CD4-positive, alpha-beta memory T cell (primary cell): ENCODE measurements at regions of chr19 and their contacts with region 1.

Region 1: DNA sequence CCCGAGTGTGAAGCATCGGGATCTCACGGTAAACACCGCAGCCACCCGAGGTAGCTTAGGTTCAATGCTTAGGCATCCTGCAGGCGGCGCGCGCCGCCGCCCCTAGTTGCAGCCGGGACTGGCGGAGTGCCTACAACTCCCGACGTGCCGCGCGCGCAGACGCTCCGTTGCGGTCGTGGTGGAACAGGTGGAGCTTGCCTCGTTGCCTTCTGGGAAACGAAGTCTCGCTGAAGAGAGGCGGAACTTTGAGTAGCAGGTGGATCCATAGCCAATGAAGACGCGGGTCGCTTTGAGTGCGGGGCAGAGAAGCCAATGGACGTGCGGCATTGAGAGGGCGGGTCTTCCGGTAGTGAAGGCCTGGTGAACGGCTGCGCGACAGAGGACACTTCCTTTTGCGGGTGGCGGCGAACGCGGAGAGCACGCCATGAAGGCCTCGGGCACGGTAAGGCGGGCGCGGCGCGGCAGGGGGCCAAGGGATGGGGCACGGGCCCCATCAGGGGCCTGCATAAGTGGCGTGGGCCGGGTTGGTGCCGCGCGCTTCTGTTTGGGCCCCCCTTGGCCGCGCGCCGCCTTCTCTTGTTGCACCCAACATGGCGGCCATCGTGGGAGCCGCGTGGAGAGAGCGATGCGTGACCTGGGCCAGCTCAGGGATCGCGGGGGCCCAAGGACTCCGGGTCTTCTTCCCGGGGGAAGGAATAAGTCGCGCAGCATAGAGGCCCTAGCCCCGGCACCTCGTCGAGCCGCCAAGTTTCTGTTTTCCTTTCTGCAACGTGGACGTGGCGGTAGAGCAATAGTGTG is at the start of gene RPL18A:
- DNase-seq: peak; percentile 96 to 100 (median 99)
- H3K4me3 ChIP-seq: peak within 1 kb of the TSS; percentile 91 to 100
- H3K4me3 Mint-ChIP-seq: peak within 1 kb of the TSS; percentile 98 to 100 (median 100)
- H3K27ac ChIP-seq: peak within 1 kb of the TSS; percentile 79
- H3K27ac Mint-ChIP-seq: peak within 1 kb of the TSS; percentile 88 to 100 (median 98)
- H3K4me1 ChIP-seq: peaks cover 36% of the 10 kb centered on the region
- H3K4me1 Mint-ChIP-seq: peaks cover 21 to 46% (median 29%) of the 10 kb centered on the region in 4 donors
- H3K27me3 ChIP-seq: no peaks in the 10 kb centered on the region
- H3K27me3 Mint-ChIP-seq: no peaks in the 10 kb centered on the region
- total RNA-seq, gene RPL18A: 3,084 to 3,117 TPM

Region 2: DNA sequence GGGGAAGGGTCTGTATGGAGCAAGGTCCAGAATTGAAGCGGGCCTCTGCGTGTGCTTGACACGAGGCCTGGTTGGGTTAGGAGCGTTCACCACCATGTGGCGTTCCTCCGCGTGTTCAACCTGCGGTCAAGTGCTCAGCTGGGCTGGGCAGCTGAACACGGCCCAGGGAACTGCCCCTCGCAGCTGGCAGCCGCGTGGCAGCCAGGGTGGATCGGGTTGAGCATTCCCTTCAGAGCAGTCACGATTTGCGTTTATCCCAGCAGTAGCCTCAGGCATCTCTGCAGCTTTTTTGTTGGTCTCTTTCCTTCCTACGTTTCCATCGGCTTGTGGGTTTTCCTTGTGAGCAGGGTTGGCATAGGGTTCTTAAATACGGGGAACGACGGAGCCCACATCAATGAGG is 999.6 kb before region 1 on chr19:
- CTCF ChIA-PET with region 1: no interaction called
- POLR2A ChIA-PET with region 1: no interaction called
- intact Hi-C with region 1: no loop called
- DNase-seq: no peak
- H3K4me3 ChIP-seq: no peak overlapping the region
- H3K4me3 Mint-ChIP-seq: no peak overlapping the region
- H3K27ac ChIP-seq: no peak overlapping the region
- H3K27ac Mint-ChIP-seq: peak overlapping the region in 2 of 7 donors; percentile 37 to 90
- H3K4me1 ChIP-seq: no peaks in the 10 kb centered on the region
- H3K4me1 Mint-ChIP-seq: no peaks in the 10 kb centered on the region
- H3K27me3 ChIP-seq: no peaks in the 10 kb centered on the region
- H3K27me3 Mint-ChIP-seq: no peaks in the 10 kb centered on the region

Region 3: GRCh38 chr19:17470068-17470841 is 389.5 kb before region 1 on chr19 and contains the start of gene SLC27A1:
- CTCF ChIA-PET with region 1: interaction called, 3 read pairs
- POLR2A ChIA-PET with region 1: no interaction called
- intact Hi-C with region 1: loop called (anchors 10 kb)
- DNase-seq: peak; percentile 85 to 93 (median 87)
- H3K4me3 ChIP-seq: peak within 1 kb of the TSS; percentile 91 to 93
- H3K4me3 Mint-ChIP-seq: peak within 1 kb of the TSS; percentile 95 to 100 (median 96)
- H3K27ac ChIP-seq: peak within 1 kb of the TSS; percentile 65
- H3K27ac Mint-ChIP-seq: peak within 1 kb of the TSS; percentile 82 to 99 (median 96)
- H3K4me1 ChIP-seq: peaks cover 15% of the 10 kb centered on the region
- H3K4me1 Mint-ChIP-seq: peaks cover 9 to 42% (median 22%) of the 10 kb centered on the region in 4 donors
- H3K27me3 ChIP-seq: no peaks in the 10 kb centered on the region
- H3K27me3 Mint-ChIP-seq: no peaks in the 10 kb centered on the region
- total RNA-seq, gene SLC27A1: 9.2 to 10.1 TPM

Region 4: GRCh38 chr19:17718947-17719711 is 140.6 kb before region 1 on chr19 and contains the start of gene MAP1S:
- CTCF ChIA-PET with region 1: interaction called, 5 read pairs
- POLR2A ChIA-PET with region 1: interaction called, 13 read pairs
- intact Hi-C with region 1: loop called (anchors 5 kb)
- DNase-seq: peak; percentile 42 to 59 (median 47)
- H3K4me3 ChIP-seq: peak within 1 kb of the TSS; percentile 51 to 88
- H3K4me3 Mint-ChIP-seq: peak within 1 kb of the TSS; percentile 88 to 93 (median 90)
- H3K27ac ChIP-seq: peak within 1 kb of the TSS; percentile 53
- H3K27ac Mint-ChIP-seq: peak within 1 kb of the TSS; percentile 82 to 94 (median 91)
- H3K4me1 ChIP-seq: peaks cover 32% of the 10 kb centered on the region
- H3K4me1 Mint-ChIP-seq: peaks cover 19 to 46% (median 36%) of the 10 kb centered on the region in 4 donors
- H3K27me3 ChIP-seq: no peaks in the 10 kb centered on the region
- H3K27me3 Mint-ChIP-seq: no peaks in the 10 kb centered on the region
- total RNA-seq, gene MAP1S: 59.1 to 64.9 TPM

Region 5: DNA sequence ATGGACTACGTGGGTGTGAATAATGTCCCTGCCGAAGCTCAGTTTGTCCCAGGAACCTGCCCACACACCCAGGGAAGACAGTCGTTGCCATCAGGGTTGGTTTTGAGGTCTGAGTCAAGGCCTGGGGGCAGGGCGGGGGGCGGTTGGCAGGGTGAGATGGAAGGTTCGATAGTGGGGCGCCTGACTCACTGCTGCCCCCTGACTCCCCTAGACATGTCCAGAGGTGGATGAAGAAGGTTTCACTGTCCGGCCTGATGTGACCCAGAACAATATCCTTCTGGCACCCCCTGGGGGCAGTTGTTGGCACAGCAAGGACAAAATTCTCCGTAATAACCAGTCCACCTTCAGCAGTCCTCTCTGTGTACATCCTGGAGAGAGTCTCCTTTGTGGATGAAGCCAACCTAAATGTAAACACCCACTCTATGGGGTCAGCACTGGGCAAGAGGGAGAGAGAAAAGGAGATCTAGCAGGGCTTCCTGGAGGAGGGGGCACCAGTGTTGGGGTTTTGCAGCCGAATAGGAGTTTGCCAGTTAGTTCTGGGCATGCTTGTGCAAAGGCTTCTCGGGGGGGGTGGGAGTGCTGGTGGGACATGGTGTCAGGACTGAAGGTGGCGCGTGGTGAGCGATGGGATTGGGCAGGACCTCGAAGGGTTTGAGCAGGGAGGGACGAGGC is 84.4 kb before region 1 on chr19:
- CTCF ChIA-PET with region 1: interaction called, 7 read pairs
- POLR2A ChIA-PET with region 1: no interaction called
- intact Hi-C with region 1: loop called (anchors 2 kb)
- DNase-seq: no peak
- H3K4me3 ChIP-seq: no peak overlapping the region
- H3K4me3 Mint-ChIP-seq: no peak overlapping the region
- H3K27ac ChIP-seq: no peak overlapping the region
- H3K27ac Mint-ChIP-seq: peak overlapping the region in 6 of 7 donors; percentile 24 to 75 (median 38)
- H3K4me1 ChIP-seq: no peaks in the 10 kb centered on the region
- H3K4me1 Mint-ChIP-seq: peaks cover 2 to 7% (median 5%) of the 10 kb centered on the region in 4 donors
- H3K27me3 ChIP-seq: no peaks in the 10 kb centered on the region
- H3K27me3 Mint-ChIP-seq: no peaks in the 10 kb centered on the region

Region 6: DNA sequence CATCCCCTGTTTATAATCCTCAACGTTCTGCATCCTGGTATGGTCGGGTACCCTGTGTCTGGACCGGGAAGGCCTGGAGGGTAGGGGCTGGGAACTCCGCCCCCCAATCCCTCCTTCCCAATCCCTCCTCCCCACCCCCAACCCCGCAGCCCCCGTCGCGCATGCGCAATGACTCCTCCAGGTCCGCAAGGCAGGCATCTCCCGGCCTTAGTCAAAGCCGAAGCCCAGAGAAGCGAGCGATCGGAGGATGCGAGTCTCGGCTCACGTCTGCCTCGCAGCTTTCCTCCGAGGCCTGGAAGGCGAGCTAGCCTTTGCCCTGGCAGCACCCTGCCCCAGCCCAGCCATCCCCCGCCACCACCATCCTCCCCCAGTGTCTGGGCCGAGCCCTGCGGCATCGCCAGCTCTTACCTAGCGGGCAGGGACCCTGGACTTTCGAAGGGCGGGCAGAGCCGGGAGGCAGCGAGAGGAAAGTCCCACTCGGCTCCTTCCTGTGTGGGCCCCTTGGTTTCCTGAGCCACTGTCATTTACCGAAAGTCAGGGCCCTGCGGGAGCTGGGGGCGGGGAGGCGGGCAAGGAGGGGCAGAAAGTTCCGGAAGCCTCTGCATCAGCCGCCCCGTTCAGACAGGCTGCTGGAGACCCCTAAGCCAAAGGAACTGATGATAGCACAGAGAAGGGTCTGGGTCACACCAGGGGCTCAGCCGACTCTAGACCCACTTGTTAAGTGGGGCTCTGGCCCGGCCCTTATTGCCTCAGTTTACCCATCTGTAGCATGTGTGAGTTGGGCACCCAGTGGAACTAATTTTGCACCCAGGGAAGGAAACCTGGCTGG is 12.0 kb before region 1 on chr19 and contains the start of gene JAK3:
- CTCF ChIA-PET with region 1: interaction called, 49 read pairs
- POLR2A ChIA-PET with region 1: interaction called, 38 read pairs
- intact Hi-C with region 1: loop called (anchors 1 kb)
- DNase-seq: peak; percentile 80 to 91 (median 84)
- H3K4me3 ChIP-seq: peak within 1 kb of the TSS; percentile 52 to 76
- H3K4me3 Mint-ChIP-seq: peak within 1 kb of the TSS; percentile 91 to 98 (median 94)
- H3K27ac ChIP-seq: peak within 1 kb of the TSS; percentile 91
- H3K27ac Mint-ChIP-seq: peak within 1 kb of the TSS; percentile 95 to 98 (median 97)
- H3K4me1 ChIP-seq: peaks cover 76% of the 10 kb centered on the region
- H3K4me1 Mint-ChIP-seq: peaks cover 39 to 80% (median 59%) of the 10 kb centered on the region in 4 donors
- H3K27me3 ChIP-seq: no peaks in the 10 kb centered on the region
- H3K27me3 Mint-ChIP-seq: no peaks in the 10 kb centered on the region
- total RNA-seq, gene JAK3: 132 to 135 TPM

Region 7: DNA sequence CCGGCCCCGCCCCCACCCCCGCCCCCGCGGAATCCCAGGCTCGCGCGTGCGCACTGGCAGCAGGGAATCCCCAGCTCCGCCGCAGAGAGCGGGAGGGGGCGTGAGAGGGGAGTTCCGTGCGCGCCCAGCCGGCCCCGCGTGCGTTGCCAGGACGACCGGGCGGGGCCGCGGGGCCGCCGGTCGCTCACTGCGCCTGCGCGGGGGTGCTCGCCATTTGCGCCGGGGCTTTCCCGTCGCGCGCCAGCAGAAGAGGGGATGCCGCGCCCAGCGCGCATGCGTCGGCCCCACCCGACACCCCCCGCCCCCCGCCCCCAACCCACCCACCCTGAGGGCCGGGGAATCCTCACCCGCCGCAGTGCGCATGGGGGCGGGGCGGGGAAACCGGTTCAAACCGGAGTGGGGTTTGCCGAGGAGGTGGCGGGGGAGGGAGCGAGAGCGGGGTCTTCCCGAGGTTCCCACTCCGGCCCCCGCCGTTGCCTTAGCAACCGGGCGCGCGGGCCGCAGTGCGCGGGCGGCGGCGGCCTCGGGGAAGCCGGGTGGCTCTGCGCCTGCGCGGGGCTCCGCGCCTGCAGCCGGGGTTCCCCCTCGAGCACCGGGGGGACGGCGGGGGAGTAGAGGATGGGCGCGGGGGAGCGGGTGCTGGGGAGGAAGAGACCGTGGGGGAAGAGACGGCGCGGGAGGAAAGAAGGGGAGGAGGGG is 88.2 kb after region 1 on chr19:
- CTCF ChIA-PET with region 1: interaction called, 3 read pairs
- POLR2A ChIA-PET with region 1: interaction called, 9 read pairs
- intact Hi-C with region 1: loop called (anchors 1 kb)
- DNase-seq: peak; percentile 94 to 97 (median 96)
- H3K4me3 ChIP-seq: peak overlapping the region in 1 of 2 donors; percentile 43
- H3K4me3 Mint-ChIP-seq: peak overlapping the region; percentile 54 to 90 (median 80)
- H3K27ac ChIP-seq: peak overlapping the region; percentile 100
- H3K27ac Mint-ChIP-seq: peak overlapping the region; percentile 64 to 99 (median 84)
- H3K4me1 ChIP-seq: peaks cover 52% of the 10 kb centered on the region
- H3K4me1 Mint-ChIP-seq: peaks cover 25 to 62% (median 41%) of the 10 kb centered on the region in 4 donors
- H3K27me3 ChIP-seq: peaks cover 25% of the 10 kb centered on the region
- H3K27me3 Mint-ChIP-seq: peaks cover 21 to 27% of the 10 kb centered on the region in 2 donors

Region 8: DNA sequence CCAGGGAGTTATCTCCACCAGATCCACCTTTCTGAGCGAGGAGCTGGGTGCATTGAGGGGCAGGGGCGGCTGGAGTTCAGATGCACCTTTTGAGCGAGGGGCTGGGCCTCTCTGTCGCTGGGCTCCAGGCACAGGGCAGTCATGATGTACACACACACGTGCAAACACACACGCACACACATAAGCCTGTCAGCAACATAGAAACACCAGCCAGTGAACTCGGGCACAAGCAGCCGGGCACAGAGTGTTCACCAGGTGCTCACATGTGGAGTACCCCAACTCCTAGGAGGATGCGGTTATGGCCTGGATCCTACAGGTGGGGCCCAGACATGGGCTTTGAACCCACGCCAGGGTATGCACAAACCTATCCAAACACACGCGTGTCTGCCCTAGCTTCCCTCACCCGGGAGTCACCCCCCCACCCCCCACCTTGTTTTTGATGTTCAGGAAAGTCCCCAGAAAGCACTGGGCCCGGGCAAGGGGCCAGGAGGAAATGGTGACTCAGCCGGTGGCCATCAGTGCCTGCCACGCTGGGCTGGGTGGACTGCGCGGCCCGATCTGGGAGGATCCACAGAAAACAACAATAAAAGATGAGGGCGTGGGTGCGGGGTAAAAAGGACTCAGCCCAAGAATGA is 161.5 kb after region 1 on chr19:
- CTCF ChIA-PET with region 1: no interaction called
- POLR2A ChIA-PET with region 1: no interaction called
- intact Hi-C with region 1: no loop called
- DNase-seq: peak; percentile 57 to 91 (median 64)
- H3K4me3 ChIP-seq: no peak overlapping the region
- H3K4me3 Mint-ChIP-seq: peak overlapping the region; percentile 45 to 85 (median 68)
- H3K27ac ChIP-seq: peak overlapping the region; percentile 66
- H3K27ac Mint-ChIP-seq: peak overlapping the region; percentile 91 to 99 (median 96)
- H3K4me1 ChIP-seq: peaks cover 61% of the 10 kb centered on the region
- H3K4me1 Mint-ChIP-seq: peaks cover 41 to 76% (median 60%) of the 10 kb centered on the region in 4 donors
- H3K27me3 ChIP-seq: no peaks in the 10 kb centered on the region
- H3K27me3 Mint-ChIP-seq: no peaks in the 10 kb centered on the region